Activated naive CD8-positive, alpha-beta T cell treated with anti-CD3 and anti-CD28 coated beads, Interleukin-2, amount 10 ng/mL, durations not matched to agents 7 days and 5 days (primary cell): ENCODE measurements at regions of chr6 and their contacts with region 1.

Region 1: DNA sequence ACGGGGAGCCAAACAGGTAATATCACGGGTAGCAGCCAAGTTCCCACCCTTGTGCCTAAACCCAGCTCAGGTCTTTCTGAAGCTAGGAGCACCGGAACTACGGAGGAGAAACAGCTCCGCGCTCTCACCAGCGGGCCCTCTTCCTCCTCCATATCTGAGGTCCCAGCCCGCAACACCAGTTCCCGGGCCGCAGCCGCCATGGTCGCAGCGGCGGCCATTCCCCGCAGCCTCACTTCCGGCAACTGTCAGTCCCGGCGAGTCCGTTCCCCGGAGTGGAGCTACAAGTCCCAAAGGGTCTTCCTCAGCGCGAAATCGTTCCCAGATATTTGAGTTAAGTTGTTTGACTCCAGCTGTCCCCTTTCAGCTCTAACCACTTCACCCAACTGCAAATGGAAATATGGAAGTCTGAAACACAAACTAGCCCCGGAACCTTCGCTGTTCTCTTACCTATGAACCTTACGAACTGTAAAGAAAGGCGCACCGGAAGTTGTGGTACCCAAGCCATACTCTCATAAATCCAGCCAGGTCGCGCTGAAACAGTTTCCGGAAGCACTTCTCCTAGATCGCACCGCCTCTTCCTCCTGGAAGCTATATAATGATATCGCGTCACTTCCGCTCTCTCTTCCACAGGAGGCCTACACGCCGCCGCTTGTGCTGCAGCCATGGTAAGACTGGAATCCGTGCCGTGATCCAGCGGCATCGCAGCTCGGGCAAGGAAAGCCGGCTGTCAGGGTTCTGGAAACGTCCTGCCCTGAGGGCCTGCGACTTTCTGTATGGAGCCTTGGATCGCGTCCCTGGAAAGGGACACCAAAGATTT is at the starts of genes RPS18 and VPS52:
- DNase-seq: peak; percentile 87
- ATAC-seq: peak; percentile 91
- H3K4me3 Mint-ChIP-seq: peak within 1 kb of the TSS; percentile 94
- H3K27ac Mint-ChIP-seq: peak within 1 kb of the TSS; percentile 99
- H3K4me1 Mint-ChIP-seq: peaks cover 43% of the 10 kb centered on the region
- H3K27me3 Mint-ChIP-seq: no peaks in the 10 kb centered on the region
- total RNA-seq, gene RPS18: 3,300 to 3,409 TPM
- total RNA-seq, gene VPS52: 72.3 to 76.0 TPM

Region 2: GRCh38 chr6:33248925-33249731 is 22.5 kb before region 1 on chr6:
- POLR2A ChIA-PET with region 1: interaction called, 39 read pairs
- DNase-seq: peak; percentile 92
- ATAC-seq: peak; percentile 94
- H3K4me3 Mint-ChIP-seq: peak overlapping the region; percentile 87
- H3K27ac Mint-ChIP-seq: peak overlapping the region; percentile 91
- H3K4me1 Mint-ChIP-seq: peaks cover 26% of the 10 kb centered on the region
- H3K27me3 Mint-ChIP-seq: peaks cover 6% of the 10 kb centered on the region

Region 3: GRCh38 chr6:33288921-33289748 is 17.5 kb after region 1 on chr6 and contains the starts of genes PFDN6 and WDR46:
- POLR2A ChIA-PET with region 1: interaction called, 107 read pairs
- DNase-seq: peak; percentile 74
- ATAC-seq: peak; percentile 97
- H3K4me3 Mint-ChIP-seq: peak within 1 kb of the TSS; percentile 96
- H3K27ac Mint-ChIP-seq: peak within 1 kb of the TSS; percentile 90
- H3K4me1 Mint-ChIP-seq: peaks cover 31% of the 10 kb centered on the region
- H3K27me3 Mint-ChIP-seq: no peaks in the 10 kb centered on the region
- total RNA-seq, gene PFDN6: 53.3 to 54.7 TPM
- total RNA-seq, gene WDR46: 50.0 to 58.0 TPM

Region 4: DNA sequence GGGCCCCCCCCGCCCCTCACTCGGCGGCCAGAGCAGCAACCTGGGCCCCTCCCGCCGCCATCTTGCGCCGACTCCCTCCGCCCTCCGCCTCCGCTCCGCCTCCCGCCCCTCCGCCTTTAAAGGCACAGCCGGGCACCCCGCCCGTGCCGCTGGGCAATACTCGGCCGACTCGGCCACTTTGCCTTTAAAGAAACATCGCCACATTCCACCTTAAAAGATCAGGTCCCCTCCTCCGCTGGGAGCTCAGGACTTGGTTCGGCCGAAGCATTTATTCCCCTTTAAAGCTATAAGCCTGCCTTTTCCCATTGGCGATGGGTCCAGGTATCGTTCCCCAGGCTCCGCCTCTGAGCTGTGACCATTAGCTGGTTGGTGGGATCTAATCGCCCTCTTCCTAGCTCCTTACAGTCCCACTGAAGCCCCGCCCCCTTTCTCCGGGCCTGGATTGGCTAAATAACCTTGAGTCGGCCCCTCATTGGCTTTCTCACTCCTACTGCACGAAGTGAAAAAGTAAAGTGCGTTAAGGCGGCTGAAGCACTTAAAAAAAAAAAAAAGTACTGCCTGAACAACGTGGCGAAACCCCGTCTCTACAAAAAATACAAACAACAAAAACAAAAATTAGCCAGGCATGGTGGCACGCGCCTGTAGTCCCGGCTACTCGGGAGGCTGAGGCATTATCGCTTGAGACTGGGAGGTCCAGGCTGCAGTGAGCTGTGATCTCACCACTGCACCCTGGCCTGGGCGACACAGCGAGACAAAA is 46.2 kb after region 1 on chr6 and contains the start of gene ZBTB22:
- POLR2A ChIA-PET with region 1: interaction called, 20 read pairs
- DNase-seq: peak; percentile 94
- ATAC-seq: peak; percentile 69
- H3K4me3 Mint-ChIP-seq: peak within 1 kb of the TSS; percentile 100
- H3K27ac Mint-ChIP-seq: peak within 1 kb of the TSS; percentile 98
- H3K4me1 Mint-ChIP-seq: peaks cover 54% of the 10 kb centered on the region
- H3K27me3 Mint-ChIP-seq: no peaks in the 10 kb centered on the region
- total RNA-seq, gene ZBTB22: 20.9 to 24.5 TPM

Region 5: GRCh38 chr6:33417903-33418689 is 146.4 kb after region 1 on chr6 and contains the start of gene CUTA:
- POLR2A ChIA-PET with region 1: interaction called, 10 read pairs
- DNase-seq: peak; percentile 98
- ATAC-seq: peak; percentile 89
- H3K4me3 Mint-ChIP-seq: peak within 1 kb of the TSS; percentile 96
- H3K27ac Mint-ChIP-seq: peak within 1 kb of the TSS; percentile 97
- H3K4me1 Mint-ChIP-seq: peaks cover 48% of the 10 kb centered on the region
- H3K27me3 Mint-ChIP-seq: peaks cover 3% of the 10 kb centered on the region
- total RNA-seq, gene CUTA: 202 to 209 TPM

Region 6: DNA sequence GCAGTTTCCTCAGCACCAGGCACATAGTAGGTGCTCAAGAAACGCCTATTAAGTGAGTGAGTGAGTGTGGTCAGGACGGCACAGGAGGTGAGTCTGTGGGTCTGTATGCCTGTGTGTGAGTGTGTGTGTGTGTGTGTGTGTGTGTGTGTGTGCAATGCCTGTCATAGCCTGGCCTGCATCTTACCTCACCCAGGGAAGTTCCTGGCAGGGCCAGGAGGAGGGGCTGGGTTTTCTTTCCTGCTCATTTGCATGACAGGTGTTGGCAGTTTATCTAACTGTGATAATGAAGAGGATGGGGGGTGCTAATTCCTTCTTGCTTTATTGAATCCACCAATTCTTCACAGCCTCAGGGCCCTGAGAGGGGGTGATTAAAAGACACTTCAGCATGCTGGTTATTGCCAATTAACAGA is 678.8 kb after region 1 on chr6:
- POLR2A ChIA-PET with region 1: no interaction called
- DNase-seq: no peak
- ATAC-seq: no peak
- H3K4me3 Mint-ChIP-seq: no peak overlapping the region
- H3K27ac Mint-ChIP-seq: no peak overlapping the region
- H3K4me1 Mint-ChIP-seq: peaks cover 5% of the 10 kb centered on the region
- H3K27me3 Mint-ChIP-seq: peaks cover 11% of the 10 kb centered on the region